ENCODE measurements at regions of chr2 and their contacts with region 1.

Region 1: DNA sequence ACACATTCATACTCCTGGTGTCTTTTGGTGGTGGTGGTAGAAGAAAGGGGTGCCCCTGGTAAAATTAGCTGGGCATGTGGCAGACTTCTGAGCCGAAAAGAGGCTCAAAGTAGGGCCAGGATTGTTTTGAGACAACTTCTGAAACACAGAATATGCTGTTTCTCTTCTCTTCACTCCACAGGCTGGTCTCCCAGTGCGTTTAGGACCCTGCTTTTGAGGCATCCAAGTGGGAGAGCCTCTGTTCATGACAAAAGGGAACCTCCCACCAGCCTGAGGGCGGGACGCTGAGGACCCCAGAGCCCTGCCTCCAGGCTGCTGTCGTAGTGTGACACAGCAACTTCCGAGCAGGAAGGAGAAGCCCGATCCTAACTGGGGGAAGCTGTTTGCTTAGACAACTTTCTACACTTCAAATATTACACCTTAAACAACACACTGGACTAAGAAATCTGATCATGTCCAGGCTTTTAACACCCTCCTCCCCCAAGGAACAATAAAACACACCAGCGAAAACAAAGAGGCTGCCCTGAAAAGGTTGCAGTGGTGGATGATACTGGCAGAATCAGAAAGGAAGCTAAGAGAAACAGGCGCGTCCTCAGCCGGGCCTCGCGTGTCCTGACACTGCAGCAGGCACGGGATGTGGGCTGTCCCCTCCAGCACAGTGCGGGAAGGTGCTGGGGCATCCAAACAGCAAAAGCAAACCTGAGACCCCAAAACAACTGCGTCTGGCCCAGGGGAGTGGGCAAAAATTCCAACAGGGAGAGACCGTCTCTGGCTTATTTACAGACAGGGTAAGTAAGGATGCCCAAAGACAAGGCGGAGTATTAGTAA is 9.3 kb downstream of the SERTAD2 start:
- DNase-seq: peak; percentile 81
- ATAC-seq: peak; percentile 85
- H3K4me3 Mint-ChIP-seq: peak overlapping the region; percentile 84
- H3K27ac Mint-ChIP-seq: peak overlapping the region; percentile 99
- H3K4me1 Mint-ChIP-seq: peaks cover 80% of the 10 kb centered on the region
- H3K27me3 Mint-ChIP-seq: peaks cover 26% of the 10 kb centered on the region
- CTCF ChIP-seq: no peak

Region 2: DNA sequence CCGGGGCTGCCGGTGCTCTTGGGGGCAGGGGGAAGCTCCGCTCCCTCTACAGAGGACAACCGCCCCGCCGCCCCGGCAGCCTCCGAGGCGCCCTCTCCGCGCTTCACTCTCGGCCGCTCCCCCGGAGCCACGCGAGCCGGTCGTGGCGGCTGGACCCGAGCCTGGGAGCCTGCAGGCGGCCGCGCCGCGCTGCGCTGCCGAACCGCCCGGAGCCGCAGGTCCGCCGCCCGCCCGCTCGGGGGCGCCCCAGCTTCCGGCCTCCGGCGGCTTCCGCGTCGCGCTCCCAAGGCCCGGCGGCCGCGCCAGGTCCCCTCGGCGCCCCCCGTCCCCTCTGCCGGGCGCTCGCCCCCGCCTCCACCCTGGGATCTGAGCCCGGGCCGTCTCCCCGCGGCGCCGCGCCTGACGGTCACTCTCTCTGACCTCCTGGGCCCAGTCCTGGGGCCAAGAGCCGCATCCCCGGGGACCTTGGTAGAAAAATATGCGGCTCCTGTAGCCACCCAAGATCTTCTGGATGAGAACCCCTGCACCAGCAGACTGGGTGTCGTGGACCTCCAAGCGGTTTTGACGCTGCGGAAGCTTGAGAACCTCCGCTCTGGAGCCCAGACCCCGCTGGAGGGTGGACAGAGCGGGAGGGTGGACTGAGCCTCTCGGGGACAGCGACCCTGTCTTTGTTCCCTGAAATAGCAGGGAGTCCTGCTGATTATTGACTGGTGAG is 35.0 kb before region 1 on chr2:
- CTCF ChIA-PET with region 1: interaction called, 17 read pairs
- POLR2A ChIA-PET with region 1: no interaction called
- DNase-seq: peak; percentile 70
- ATAC-seq: peak; percentile 81
- H3K4me3 Mint-ChIP-seq: peak overlapping the region; percentile 74
- H3K27ac Mint-ChIP-seq: no peak overlapping the region
- H3K4me1 Mint-ChIP-seq: peaks cover 7% of the 10 kb centered on the region
- H3K27me3 Mint-ChIP-seq: peaks cover 32% of the 10 kb centered on the region
- CTCF ChIP-seq: no peak; the same call in 1 of the 2 replicates

Region 3: GRCh38 chr2:64750817-64751285 is 106.5 kb after region 1 on chr2:
- CTCF ChIA-PET with region 1: interaction called, 39 read pairs
- POLR2A ChIA-PET with region 1: interaction called, 3 read pairs
- DNase-seq: peak; percentile 97
- ATAC-seq: peak; percentile 94
- H3K4me3 Mint-ChIP-seq: peak overlapping the region; percentile 96
- H3K27ac Mint-ChIP-seq: peak overlapping the region; percentile 97
- H3K4me1 Mint-ChIP-seq: peaks cover 15% of the 10 kb centered on the region
- H3K27me3 Mint-ChIP-seq: peaks cover 23% of the 10 kb centered on the region
- CTCF ChIP-seq: no peak

Region 4: DNA sequence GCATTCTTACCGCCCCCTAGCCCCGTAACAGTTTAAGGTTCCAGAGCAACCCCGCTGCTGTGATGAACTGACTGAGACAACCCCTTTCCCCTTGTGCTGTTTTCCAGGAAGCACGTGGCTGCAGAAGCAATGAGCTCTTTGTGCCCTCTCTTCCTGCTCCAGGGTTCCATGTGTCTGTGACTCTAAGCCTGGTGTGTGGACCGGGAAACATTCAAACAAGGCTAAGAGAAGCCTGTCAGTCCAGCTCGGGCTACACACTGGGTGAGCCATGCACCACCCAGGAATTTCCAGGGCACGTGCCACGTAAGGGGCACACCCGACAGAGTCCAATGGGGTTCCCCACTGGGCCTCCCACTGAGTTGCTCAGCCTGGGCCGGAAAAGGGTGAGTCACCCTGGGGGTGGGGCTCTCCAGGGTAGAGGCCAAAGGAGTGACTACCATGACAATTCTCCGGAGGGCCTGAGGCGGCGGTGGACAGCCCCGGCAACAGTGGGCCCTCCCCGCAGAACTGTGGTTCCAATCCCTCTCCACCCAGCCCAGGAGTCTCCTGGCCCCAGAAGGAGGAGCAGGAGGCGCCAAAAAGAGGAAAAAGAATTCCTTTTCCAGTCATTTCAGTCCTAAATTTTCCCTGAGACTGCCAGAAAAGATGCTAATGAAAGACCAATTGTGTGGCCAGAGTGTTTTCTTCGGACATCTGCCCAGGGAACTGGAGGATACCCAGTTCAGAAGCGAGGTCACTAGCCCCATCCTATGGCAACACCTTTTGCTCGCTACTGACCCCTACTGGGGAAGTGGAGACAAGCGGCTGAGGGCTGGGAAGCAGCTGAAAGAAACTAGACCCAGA is 187.0 kb after region 1 on chr2:
- CTCF ChIA-PET with region 1: interaction called, 10 read pairs
- POLR2A ChIA-PET with region 1: no interaction called
- DNase-seq: peak; percentile 89
- ATAC-seq: peak; percentile 93
- H3K4me3 Mint-ChIP-seq: no peak overlapping the region
- H3K27ac Mint-ChIP-seq: no peak overlapping the region
- H3K4me1 Mint-ChIP-seq: 0 out of 2 replicates have a peak, but pooled peaks cover 6% of the 10 kb centered on the region
- H3K27me3 Mint-ChIP-seq: peaks cover 4% of the 10 kb centered on the region; the same call in 1 of the 2 replicates
- CTCF ChIP-seq: peak; percentile 85

Region 5: DNA sequence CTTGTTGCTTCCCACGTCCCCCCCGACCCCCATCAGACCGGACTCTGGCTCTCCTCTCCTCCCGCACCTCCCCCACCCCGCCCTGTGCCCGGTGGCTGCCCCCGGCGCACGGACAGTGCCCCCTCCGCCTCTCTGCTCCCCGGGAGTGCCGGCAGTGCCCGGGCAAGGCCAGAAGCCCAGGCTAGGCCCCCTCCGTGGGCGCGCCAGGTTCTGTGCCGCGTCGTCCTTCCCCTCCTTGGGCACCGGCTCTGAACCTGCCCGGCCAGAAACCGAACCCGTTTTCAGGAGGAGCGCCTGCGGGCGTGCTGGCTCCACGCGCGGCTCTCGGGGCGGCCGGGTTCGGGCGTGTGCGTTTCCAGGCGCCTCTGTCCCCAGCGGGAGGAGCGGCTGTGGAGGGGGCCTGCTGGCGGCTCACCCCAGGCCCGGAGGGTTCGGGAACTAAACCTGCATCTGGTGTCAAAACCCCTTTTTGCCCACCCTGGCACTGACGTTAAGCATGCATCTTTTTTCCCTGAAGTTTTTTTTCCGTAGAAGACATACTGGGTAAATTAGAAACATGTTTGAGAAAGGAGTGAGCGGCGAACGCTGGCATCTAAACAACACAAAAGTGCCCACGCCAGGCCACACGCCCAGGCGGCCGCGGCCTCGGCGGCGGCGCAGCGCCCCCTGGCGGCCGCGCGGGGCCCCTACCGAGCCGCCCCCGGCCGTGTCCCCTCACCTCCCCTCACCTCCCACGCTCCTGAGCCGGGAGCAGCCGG is 220.9 kb after region 1 on chr2:
- CTCF ChIA-PET with region 1: interaction called, 33 read pairs
- POLR2A ChIA-PET with region 1: interaction called, 6 read pairs
- DNase-seq: peak; percentile 57
- ATAC-seq: peak; percentile 79
- H3K4me3 Mint-ChIP-seq: no peak overlapping the region
- H3K27ac Mint-ChIP-seq: no peak overlapping the region
- H3K4me1 Mint-ChIP-seq: no peaks in the 10 kb centered on the region
- H3K27me3 Mint-ChIP-seq: peaks cover 21% of the 10 kb centered on the region
- CTCF ChIP-seq: peak; percentile 90

Measured in WTC11 (cell line).